Natural killer cell (primary cell): ENCODE measurements at regions of chr1 and their contacts with region 1.

Region 1: DNA sequence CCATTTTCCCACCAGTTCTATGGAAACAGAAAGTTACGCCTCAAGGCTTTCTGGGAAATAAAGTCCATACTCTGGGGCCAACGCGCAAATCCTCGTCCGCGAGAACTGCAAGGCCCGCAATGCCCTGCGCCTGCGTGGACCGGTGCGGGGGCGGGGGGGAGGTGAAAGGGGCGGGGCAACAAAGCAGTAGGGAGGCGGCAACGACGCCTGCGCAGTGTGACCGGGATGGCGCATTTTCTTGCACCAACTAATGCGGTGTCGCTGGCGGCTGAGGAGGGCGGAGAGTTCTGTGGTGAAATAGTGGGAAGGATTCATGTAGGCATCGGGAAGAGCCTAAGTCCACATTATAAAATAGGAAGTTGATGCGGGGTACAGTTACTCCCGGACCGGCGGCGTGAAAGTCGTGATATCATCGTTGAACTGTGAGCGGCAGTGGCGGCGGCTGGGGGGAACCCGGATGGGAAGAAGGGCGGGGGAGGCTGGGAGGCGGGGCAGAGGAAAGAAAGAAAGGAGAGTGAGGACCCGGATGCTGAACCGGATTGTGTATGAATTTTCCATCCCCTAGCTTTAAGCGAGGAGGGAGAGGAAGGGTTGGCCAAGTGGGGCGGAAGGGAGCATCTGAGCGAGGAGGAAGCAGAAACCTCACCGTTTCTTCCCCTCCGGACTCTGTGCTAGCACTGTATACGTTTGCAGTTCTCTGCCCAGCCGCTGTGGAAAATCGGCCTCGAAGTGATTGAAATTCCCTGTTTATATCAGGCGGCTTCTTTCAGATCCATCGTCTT is at the start of gene GGPS1:
- DNase-seq: peak; percentile 95 to 99
- ATAC-seq: peak; percentile 71 to 92 (median 81)
- H3K4me3 ChIP-seq: peak within 1 kb of the TSS; percentile 96
- H3K4me3 Mint-ChIP-seq: no peak within 1 kb of the TSS
- H3K27ac ChIP-seq: peak within 1 kb of the TSS; percentile 92
- H3K27ac Mint-ChIP-seq: no peak within 1 kb of the TSS
- H3K4me1 ChIP-seq: peaks cover 25% of the 10 kb centered on the region
- H3K4me1 Mint-ChIP-seq: peaks cover 33 to 39% of the 10 kb centered on the region in 2 donors
- H3K27me3 ChIP-seq: no peaks in the 10 kb centered on the region
- H3K27me3 Mint-ChIP-seq: no peaks in the 10 kb centered on the region
- CTCF ChIP-seq: no peak
- total RNA-seq, gene GGPS1: 18.7 to 26.0 (median 23.9) TPM

Region 2: DNA sequence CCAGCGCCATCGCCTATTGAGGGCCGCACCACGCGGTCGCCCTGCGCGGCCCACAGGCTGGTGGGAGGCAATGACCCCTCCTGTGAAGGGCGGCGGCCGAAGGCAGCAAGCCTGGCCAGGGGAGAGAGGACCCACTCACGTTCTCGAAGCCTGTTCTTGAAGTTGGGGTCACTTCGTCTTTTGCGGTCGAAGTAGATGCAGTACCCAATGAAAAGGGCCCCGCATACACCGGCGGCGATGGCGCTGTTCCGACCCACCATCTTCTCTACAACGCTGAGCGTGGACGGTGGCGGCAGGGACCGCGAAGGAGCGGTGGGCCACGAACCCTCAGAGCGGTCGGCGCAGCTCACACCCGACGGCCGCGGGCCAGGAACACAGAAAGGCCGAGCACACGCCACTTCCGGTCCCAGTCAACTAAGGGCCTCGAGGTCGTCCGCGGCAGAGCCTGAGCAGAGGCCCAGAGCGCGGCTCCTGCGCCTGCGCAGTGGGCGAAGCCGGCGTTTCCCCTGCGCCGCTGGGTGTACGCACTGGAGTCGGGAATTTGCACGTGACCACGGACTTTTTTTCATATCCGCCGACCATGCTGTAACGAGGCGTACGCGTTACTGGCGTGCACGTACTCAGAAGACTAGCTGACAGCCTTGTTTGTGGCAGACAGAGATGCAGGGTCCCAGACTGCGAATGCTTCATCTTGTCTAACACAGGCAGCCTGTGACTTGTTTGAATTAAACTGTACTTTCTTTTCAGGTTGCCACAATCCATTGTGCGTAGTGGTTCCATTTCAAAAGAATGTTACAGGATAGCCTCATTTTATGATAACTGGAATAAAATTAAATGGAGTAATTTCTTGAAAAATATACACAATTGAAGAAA is 199.9 kb before region 1 on chr1 and contains the start of gene TOMM20:
- intact Hi-C with region 1: loop called (anchors 10 kb)
- DNase-seq: peak; percentile 90 to 98
- ATAC-seq: peak; percentile 90 to 98 (median 94)
- H3K4me3 ChIP-seq: peak within 1 kb of the TSS; percentile 98
- H3K4me3 Mint-ChIP-seq: peak within 1 kb of the TSS; percentile 98
- H3K27ac ChIP-seq: peak within 1 kb of the TSS; percentile 90
- H3K27ac Mint-ChIP-seq: peak within 1 kb of the TSS; percentile 96
- H3K4me1 ChIP-seq: peaks cover 27% of the 10 kb centered on the region
- H3K4me1 Mint-ChIP-seq: peaks cover 40 to 42% of the 10 kb centered on the region in 2 donors
- H3K27me3 ChIP-seq: no peaks in the 10 kb centered on the region
- H3K27me3 Mint-ChIP-seq: no peaks in the 10 kb centered on the region
- CTCF ChIP-seq: no peak
- total RNA-seq, gene TOMM20: 59.5 to 72.3 (median 60.2) TPM

Region 3: GRCh38 chr1:235253219-235253962 is 75.2 kb before region 1 on chr1:
- intact Hi-C with region 1: loop called (anchors 1 kb)
- DNase-seq: peak; percentile 34 to 84
- ATAC-seq: peak; percentile 89 to 95 (median 91)
- H3K4me3 ChIP-seq: no peak overlapping the region
- H3K4me3 Mint-ChIP-seq: no peak overlapping the region
- H3K27ac ChIP-seq: no peak overlapping the region
- H3K27ac Mint-ChIP-seq: peak overlapping the region in 1 of 2 donors; percentile 40
- H3K4me1 ChIP-seq: peaks cover 10% of the 10 kb centered on the region
- H3K4me1 Mint-ChIP-seq: peaks cover 19 to 30% of the 10 kb centered on the region in 2 donors
- H3K27me3 ChIP-seq: no peaks in the 10 kb centered on the region
- H3K27me3 Mint-ChIP-seq: no peaks in the 10 kb centered on the region
- CTCF ChIP-seq: peak; percentile 92

Region 4: GRCh38 chr1:235304549-235305451 is 23.7 kb before region 1 on chr1:
- intact Hi-C with region 1: loop called (anchors 2 kb)
- DNase-seq: peak in 1 of 2 donors; percentile 78
- ATAC-seq: peak; percentile 70 to 73 (median 71)
- H3K4me3 ChIP-seq: no peak overlapping the region
- H3K4me3 Mint-ChIP-seq: peak overlapping the region; percentile 82
- H3K27ac ChIP-seq: peak overlapping the region; percentile 77
- H3K27ac Mint-ChIP-seq: peak overlapping the region; percentile 94 to 97
- H3K4me1 ChIP-seq: peaks cover 55% of the 10 kb centered on the region
- H3K4me1 Mint-ChIP-seq: peaks cover 44 to 57% of the 10 kb centered on the region in 2 donors
- H3K27me3 ChIP-seq: no peaks in the 10 kb centered on the region
- H3K27me3 Mint-ChIP-seq: no peaks in the 10 kb centered on the region
- CTCF ChIP-seq: no peak

Region 5: DNA sequence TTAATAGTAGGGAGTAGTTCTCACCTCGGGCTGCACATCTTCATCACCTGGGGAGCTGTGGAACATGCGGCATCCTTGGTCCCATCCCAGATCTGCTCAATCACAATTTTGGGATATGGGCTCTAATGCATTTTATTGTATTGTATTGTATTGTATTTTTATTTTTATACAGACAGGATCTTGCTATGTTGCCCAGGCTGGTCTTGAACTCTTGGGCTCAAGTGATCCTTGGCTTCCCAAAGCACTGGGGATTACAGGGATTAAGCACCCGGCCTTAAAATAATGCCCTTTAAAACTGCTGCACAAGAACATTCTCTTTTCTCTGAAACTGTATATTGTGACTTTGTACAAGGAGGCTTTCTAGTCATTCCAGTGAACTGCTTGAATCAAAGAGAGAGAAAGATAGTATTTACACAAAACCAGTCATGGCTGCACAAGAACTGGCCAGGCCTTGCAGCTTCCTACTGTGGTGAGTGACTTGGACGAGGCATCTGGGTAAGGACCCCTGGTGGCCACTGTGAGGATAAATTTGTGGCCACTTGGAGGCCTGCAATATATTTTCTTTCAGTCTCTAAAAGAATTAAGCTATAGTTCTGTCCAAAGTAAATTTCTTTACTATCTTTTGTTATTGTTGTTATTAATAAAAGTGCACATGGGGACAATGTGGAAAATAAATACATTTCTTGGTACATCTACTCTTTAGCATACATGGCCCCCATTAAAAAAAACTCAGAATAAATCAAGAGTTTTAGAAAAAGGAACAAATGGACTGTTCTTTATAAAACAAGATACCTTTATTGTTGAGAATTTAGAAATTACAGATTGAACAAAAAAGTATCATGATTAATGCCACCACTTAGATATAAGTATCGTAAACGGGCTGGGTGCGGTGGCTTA is 86.7 kb after region 1 on chr1:
- intact Hi-C with region 1: loop called (anchors 5 kb)
- DNase-seq: peak; percentile 29 to 79
- ATAC-seq: peak; percentile 75 to 92 (median 83)
- H3K4me3 ChIP-seq: no peak overlapping the region
- H3K4me3 Mint-ChIP-seq: no peak overlapping the region
- H3K27ac ChIP-seq: no peak overlapping the region
- H3K27ac Mint-ChIP-seq: no peak overlapping the region
- H3K4me1 ChIP-seq: no peaks in the 10 kb centered on the region
- H3K4me1 Mint-ChIP-seq: peaks cover 6 to 9% of the 10 kb centered on the region in 2 donors
- H3K27me3 ChIP-seq: no peaks in the 10 kb centered on the region
- H3K27me3 Mint-ChIP-seq: no peaks in the 10 kb centered on the region
- CTCF ChIP-seq: peak; percentile 89